Upper lobe of right lung (tissue), 1 donor: ENCODE measurements at regions of chr12 and their contacts with region 1.

Region 1: GRCh38 chr12:117845271-117845904 is 123.4 kb downstream of the KSR2 start:
- DNase-seq: no peak
- ATAC-seq: no peak
- H3K4me3 ChIP-seq: no peak overlapping the region
- H3K27ac ChIP-seq: no peak overlapping the region
- H3K4me1 ChIP-seq: no peaks in the 10 kb centered on the region
- H3K27me3 ChIP-seq: peaks cover 17% of the 10 kb centered on the region
- CTCF ChIP-seq: no peak

Region 2: GRCh38 chr12:117032593-117033381 is 812.6 kb before region 1 on chr12:
- intact Hi-C with region 1: loop called (anchors 10 kb)
- DNase-seq: no peak
- ATAC-seq: peak; percentile 20
- H3K4me3 ChIP-seq: no peak overlapping the region
- H3K27ac ChIP-seq: no peak overlapping the region
- H3K4me1 ChIP-seq: no peaks in the 10 kb centered on the region
- H3K27me3 ChIP-seq: peaks cover 6% of the 10 kb centered on the region
- CTCF ChIP-seq: no peak

Region 3: GRCh38 chr12:117547209-117547608 is 298.2 kb before region 1 on chr12:
- intact Hi-C with region 1: no loop called
- DNase-seq: no peak
- ATAC-seq: no peak
- H3K4me3 ChIP-seq: no peak overlapping the region
- H3K27ac ChIP-seq: no peak overlapping the region
- H3K4me1 ChIP-seq: no peaks in the 10 kb centered on the region
- H3K27me3 ChIP-seq: no peaks in the 10 kb centered on the region
- CTCF ChIP-seq: no peak

Region 4: DNA sequence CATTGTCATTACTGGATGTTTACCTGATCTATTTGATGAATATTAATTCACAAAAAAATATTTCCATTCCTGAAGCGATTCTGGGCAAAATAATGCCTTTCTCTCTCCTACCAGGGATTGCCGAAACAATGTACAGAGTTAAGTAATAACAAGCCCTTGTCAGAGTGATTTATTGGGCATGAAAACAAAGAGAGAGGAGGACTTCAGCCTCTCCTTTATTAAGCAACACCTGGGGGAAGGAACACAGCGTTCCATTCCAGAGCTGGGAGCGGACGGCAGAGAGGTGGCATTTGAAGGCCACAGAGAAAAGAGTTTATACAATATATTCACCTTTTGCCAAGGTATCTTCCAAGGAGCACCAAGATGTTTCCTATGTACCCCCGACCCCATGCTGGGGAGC is 42.4 kb before region 1 on chr12:
- intact Hi-C with region 1: no loop called
- DNase-seq: no peak
- ATAC-seq: no peak
- H3K4me3 ChIP-seq: no peak overlapping the region
- H3K27ac ChIP-seq: no peak overlapping the region
- H3K4me1 ChIP-seq: no peaks in the 10 kb centered on the region
- H3K27me3 ChIP-seq: no peaks in the 10 kb centered on the region
- CTCF ChIP-seq: no peak